PC-3 (cell line): ENCODE measurements at regions of chr1 and their contacts with region 1.

Region 1: GRCh38 chr1:33086384-33086850 is 5.5 kb downstream of the AZIN2 start:
- DNase-seq: peak; percentile 75
- ATAC-seq: peak; percentile 92
- H3K4me3 ChIP-seq: no peak overlapping the region
- H3K27ac ChIP-seq: no peak overlapping the region
- H3K4me1 ChIP-seq: peaks cover 10% of the 10 kb centered on the region; the same call in 1 of the 2 replicates
- H3K27me3 ChIP-seq: no peaks in the 10 kb centered on the region
- CTCF ChIP-seq: peak; percentile 91

Region 2: GRCh38 chr1:32876341-32877210 is 209.8 kb before region 1 on chr1:
- CTCF ChIA-PET with region 1: interaction called, 11 read pairs
- POLR2A ChIA-PET with region 1: no interaction called
- intact Hi-C with region 1: loop called (anchors 5 kb)
- DNase-seq: peak; percentile 57
- ATAC-seq: peak; percentile 65
- H3K4me3 ChIP-seq: no peak overlapping the region
- H3K27ac ChIP-seq: no peak overlapping the region
- H3K4me1 ChIP-seq: no peaks in the 10 kb centered on the region
- H3K27me3 ChIP-seq: no peaks in the 10 kb centered on the region
- CTCF ChIP-seq: peak; percentile 78

Region 3: GRCh38 chr1:33050221-33051076 is 36.0 kb before region 1 on chr1:
- CTCF ChIA-PET with region 1: no interaction called
- POLR2A ChIA-PET with region 1: no interaction called
- intact Hi-C with region 1: no loop called
- DNase-seq: peak; percentile 94
- ATAC-seq: peak; percentile 95
- H3K4me3 ChIP-seq: no peak overlapping the region; the same call in 1 of the 2 replicates
- H3K27ac ChIP-seq: peak overlapping the region; percentile 90
- H3K4me1 ChIP-seq: peaks cover 29% of the 10 kb centered on the region
- H3K27me3 ChIP-seq: no peaks in the 10 kb centered on the region
- CTCF ChIP-seq: peak; percentile 45